ENCODE measurements at regions of chr3 and their contacts with region 1.

Region 1: DNA sequence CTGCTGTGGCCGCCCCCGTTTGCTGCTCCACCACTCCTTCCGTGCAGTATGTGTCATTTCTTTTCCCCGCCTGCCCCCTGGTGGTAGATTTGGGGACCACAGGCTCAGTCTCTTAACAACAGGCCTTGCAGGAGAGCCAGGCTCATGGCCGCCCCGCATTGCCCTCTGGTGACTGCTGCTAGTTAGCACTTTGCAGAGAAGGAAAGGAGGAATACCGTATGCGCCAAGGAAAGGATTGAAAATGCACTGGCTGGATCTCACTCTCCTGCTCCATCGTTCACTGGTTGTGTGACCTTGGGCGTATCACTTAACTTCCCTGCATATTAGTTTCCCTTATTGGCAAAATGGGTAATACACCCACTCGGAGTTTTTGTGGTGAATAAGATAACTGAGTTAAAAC is 39.3 kb upstream of the PXYLP1 start:
- DNase-seq: peak; percentile 96 to 99 (median 98)
- ATAC-seq: peak; percentile 98 to 99
- H3K4me3 ChIP-seq: no peak overlapping the region
- H3K27ac ChIP-seq: no peak overlapping the region
- H3K4me1 ChIP-seq: no peaks in the 10 kb centered on the region
- H3K27me3 ChIP-seq: no peaks in the 10 kb centered on the region

Region 2: GRCh38 chr3:140910860-140911259 is 281.5 kb before region 1 on chr3:
- intact Hi-C with region 1: loop called in 1 of 4 experiments (anchors 10 kb)
- DNase-seq: peak in 1 of 3 donors; percentile 19
- ATAC-seq: peak; percentile 51 to 65
- H3K4me3 ChIP-seq: peak overlapping the region; percentile 42
- H3K27ac ChIP-seq: no peak overlapping the region
- H3K4me1 ChIP-seq: no peaks in the 10 kb centered on the region
- H3K27me3 ChIP-seq: no peaks in the 10 kb centered on the region

Region 3: GRCh38 chr3:141000027-141000663 is 192.2 kb before region 1 on chr3:
- intact Hi-C with region 1: loop called in 2 of 4 experiments (anchors 5 kb)
- DNase-seq: peak; percentile 68 to 84 (median 81)
- ATAC-seq: peak; percentile 94 to 96
- H3K4me3 ChIP-seq: no peak overlapping the region
- H3K27ac ChIP-seq: no peak overlapping the region
- H3K4me1 ChIP-seq: no peaks in the 10 kb centered on the region
- H3K27me3 ChIP-seq: no peaks in the 10 kb centered on the region

Region 4: DNA sequence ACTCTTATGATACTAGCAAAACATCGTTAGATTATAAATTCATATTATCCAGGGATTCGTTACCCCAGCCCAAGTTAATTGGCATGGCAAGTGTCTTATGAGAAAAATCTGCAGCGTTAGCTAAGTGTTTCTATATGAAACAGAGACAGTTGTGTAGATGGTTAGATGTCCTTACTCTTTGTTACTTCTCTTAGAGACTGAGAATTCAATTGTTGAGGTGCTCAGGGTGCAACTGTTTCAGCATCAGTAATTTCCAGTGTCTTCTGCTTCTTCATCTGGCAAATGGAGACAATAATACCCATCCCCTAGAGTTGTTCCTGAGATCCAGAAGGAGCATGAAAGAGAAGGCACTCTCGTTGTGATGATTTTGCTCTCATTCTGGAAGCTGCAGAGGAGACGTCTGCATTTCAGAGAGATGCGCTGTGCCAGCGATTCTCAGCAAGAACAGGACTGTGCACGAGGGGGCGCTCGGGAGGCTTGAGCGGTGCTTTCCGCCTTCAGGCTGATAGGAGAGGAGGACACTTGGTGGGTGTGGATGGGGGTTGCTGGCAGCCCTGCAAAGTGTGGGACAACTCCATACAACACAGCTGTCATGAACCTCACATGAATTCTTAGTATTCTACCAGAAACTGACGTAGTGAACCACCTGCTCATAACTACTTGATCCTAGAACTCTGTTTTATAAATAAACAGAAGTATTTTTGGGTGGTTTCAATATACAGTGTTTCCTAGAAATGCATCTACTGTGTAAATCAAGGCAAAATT is 180.9 kb before region 1 on chr3:
- intact Hi-C with region 1: loop called in 3 of 4 experiments (anchors 5 kb)
- DNase-seq: peak; percentile 78 to 92 (median 89)
- ATAC-seq: peak; percentile 71 to 85
- H3K4me3 ChIP-seq: no peak overlapping the region
- H3K27ac ChIP-seq: no peak overlapping the region
- H3K4me1 ChIP-seq: no peaks in the 10 kb centered on the region
- H3K27me3 ChIP-seq: no peaks in the 10 kb centered on the region

Region 5: GRCh38 chr3:141105828-141106628 is 86.3 kb before region 1 on chr3:
- intact Hi-C with region 1: loop called in 1 of 4 experiments (anchors 10 kb)
- DNase-seq: peak in 2 of 3 donors; percentile 51 to 75
- ATAC-seq: peak in 1 of 2 donors; percentile 32
- H3K4me3 ChIP-seq: no peak overlapping the region
- H3K27ac ChIP-seq: no peak overlapping the region
- H3K4me1 ChIP-seq: peaks cover 7% of the 10 kb centered on the region
- H3K27me3 ChIP-seq: no peaks in the 10 kb centered on the region

Measured in right cardiac atrium (tissue), 5 donors.